ENCODE measurements at regions of chr1 and their contacts with region 1.

Region 1: GRCh38 chr1:34885405-34886247 is 26.1 kb upstream of the SMIM12 start:
- DNase-seq: peak in 9 of 14 experiments; percentile 26 to 67 (median 36)
- ATAC-seq: peak; percentile 62
- H3K4me3 ChIP-seq: peak overlapping the region; percentile 55
- H3K4me3 Mint-ChIP-seq: peak overlapping the region; percentile 38
- H3K27ac ChIP-seq: no peak overlapping the region
- H3K27ac Mint-ChIP-seq: no peak overlapping the region
- H3K4me1 ChIP-seq: peaks cover 13% of the 10 kb centered on the region
- H3K4me1 Mint-ChIP-seq: peaks cover 3% of the 10 kb centered on the region
- H3K27me3 ChIP-seq: peaks cover 31 to 50% of the 10 kb centered on the region in 2 experiments
- H3K27me3 Mint-ChIP-seq: peaks cover 74% of the 10 kb centered on the region
- CTCF ChIP-seq: no peak

Region 2: DNA sequence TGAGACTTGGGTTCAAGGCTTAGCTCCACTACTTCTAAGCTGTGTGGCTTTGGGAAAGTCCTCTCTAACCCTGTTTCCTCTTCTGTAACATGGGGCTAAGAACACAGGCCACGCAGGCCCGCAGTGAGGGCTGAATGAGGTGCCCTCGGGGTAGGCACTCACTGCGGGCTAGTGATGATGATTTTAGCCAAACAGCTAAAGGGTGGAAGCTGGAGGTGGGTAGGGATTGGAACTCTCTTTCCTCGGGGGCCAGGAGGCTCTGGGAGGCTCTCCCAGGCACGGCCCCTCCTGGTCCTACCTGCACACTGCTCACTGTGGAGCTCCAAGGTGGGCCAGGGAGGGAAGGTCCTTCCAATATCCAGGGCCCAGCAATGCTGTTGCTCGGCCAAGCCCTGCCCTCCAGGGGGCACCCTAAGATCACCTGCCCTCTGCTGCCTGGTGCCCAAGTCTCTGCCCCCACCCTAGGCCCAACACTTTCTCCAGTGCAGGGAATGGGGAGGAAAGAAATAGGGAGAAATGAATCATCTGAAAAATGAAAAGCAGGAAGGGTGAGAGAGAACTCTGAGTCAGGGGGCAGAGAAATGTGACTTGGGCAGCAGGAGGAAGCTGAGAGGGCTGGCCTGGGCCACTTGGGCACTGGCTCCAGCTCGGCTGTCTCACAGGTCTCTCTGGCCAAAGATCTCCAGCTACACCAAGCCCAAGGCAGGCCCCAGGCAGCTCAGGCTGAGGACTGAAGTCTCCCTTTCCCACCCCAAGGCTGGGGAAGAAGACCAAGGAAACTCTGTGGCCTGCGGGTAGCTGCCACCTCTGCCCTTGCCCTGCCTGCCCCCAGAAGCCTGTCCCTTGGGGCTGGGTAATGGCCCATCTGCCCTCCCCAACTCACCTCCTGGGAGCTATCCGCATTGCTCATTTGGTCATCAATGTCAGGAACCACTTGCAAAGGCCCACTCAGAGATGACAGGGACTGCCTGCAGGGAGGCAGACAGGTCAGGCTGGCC is 1457.2 kb after region 1 on chr1:
- CTCF ChIA-PET with region 1: no interaction called
- POLR2A ChIA-PET with region 1: no interaction called
- intact Hi-C with region 1: loop called in 1 of 2 experiments (anchors 10 kb)
- DNase-seq: peak; percentile 44 to 83 (median 63)
- ATAC-seq: peak; percentile 92
- H3K4me3 ChIP-seq: no peak overlapping the region
- H3K4me3 Mint-ChIP-seq: no peak overlapping the region
- H3K27ac ChIP-seq: no peak overlapping the region
- H3K27ac Mint-ChIP-seq: peak overlapping the region; percentile 58
- H3K4me1 ChIP-seq: peaks cover 26% of the 10 kb centered on the region
- H3K4me1 Mint-ChIP-seq: peaks cover 19% of the 10 kb centered on the region
- H3K27me3 ChIP-seq: no peaks in the 10 kb centered on the region
- H3K27me3 Mint-ChIP-seq: no peaks in the 10 kb centered on the region
- CTCF ChIP-seq: peak; percentile 79

Measured in CD4-positive, alpha-beta T cell (primary cell).